ENCODE measurements at regions of chr1 and their contacts with region 1.

Region 1: DNA sequence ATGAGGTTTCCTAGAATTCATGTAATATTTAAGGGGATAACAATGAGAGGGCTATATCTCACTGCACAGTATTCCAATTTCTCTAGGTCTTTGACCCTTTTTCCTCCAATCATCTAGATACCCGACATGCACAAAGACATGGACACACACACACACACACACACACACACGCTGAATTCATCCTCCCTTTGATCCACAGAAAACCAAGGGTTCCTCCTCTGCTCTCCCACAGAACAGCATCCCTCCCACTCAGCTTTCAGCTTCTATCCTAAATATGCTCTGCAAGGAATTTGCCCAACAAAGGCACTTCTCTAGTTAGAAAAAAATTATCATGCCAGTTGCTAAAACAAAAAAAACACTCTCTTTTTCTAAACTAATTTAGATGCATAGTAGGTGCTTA is 231.7 kb downstream of the RGS7 start:
- DNase-seq: no peak
- H3K4me3 ChIP-seq: no peak overlapping the region
- H3K27ac ChIP-seq: no peak overlapping the region
- H3K4me1 ChIP-seq: no peaks in the 10 kb centered on the region
- H3K27me3 ChIP-seq: no peaks in the 10 kb centered on the region
- CTCF ChIP-seq: no peak
- EP300 ChIP-seq: no peak
- POLR2A ChIP-seq: no peak

Region 2: DNA sequence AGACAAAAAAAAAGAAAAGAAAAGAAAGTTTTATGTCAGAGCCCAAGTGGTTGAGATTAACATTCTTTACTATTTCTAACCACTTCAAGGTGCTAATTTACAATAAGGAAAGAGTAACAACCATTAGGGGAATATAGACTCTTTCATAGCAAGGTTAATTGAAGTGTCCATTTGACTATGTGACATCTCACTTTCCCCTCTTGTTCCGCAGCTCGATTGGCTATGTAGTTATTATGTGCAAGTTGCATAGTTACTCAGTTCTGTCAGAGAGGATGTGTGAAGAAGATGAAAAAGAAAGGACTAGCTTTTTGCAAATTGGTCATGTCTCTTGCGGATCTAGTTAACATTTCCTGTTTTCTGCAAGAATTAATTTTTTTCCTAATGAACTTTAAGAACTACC is 42.0 kb before region 1 on chr1:
- in situ Hi-C with region 1: no loop called
- intact Hi-C with region 1: loop called (anchors 1 kb)
- DNase-seq: no peak
- H3K4me3 ChIP-seq: no peak overlapping the region
- H3K27ac ChIP-seq: no peak overlapping the region
- H3K4me1 ChIP-seq: no peaks in the 10 kb centered on the region
- H3K27me3 ChIP-seq: no peaks in the 10 kb centered on the region
- CTCF ChIP-seq: no peak
- EP300 ChIP-seq: no peak
- POLR2A ChIP-seq: no peak

Region 3: DNA sequence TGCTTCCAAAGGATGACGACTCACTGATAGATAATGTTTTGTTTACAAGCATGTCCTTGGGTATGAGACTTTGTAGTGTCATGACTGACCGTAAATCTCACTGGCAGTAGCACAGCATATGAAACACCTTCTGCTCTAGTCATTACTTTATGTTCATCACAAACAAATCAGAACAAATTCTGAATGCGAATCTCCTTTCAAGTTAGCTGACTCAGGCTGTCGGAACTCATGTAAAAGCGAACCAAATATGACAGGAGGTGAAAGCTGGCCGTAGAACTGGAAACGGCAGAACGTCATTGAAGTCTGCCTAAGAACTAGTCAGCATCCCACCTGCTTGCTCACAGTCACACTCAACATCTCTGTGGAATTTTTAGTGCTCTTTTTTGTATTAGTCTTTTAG is 87.9 kb after region 1 on chr1:
- in situ Hi-C with region 1: no loop called
- intact Hi-C with region 1: no loop called
- DNase-seq: no peak
- H3K4me3 ChIP-seq: no peak overlapping the region
- H3K27ac ChIP-seq: no peak overlapping the region
- H3K4me1 ChIP-seq: peaks cover 0 to 9% (median 0%) of the 10 kb centered on the region in 4 donors
- H3K27me3 ChIP-seq: no peaks in the 10 kb centered on the region
- CTCF ChIP-seq: no peak
- EP300 ChIP-seq: no peak
- POLR2A ChIP-seq: no peak